Posterior vena cava (tissue), 2 donors: ENCODE measurements at regions of chr2 and their contacts with region 1.

Region 1: DNA sequence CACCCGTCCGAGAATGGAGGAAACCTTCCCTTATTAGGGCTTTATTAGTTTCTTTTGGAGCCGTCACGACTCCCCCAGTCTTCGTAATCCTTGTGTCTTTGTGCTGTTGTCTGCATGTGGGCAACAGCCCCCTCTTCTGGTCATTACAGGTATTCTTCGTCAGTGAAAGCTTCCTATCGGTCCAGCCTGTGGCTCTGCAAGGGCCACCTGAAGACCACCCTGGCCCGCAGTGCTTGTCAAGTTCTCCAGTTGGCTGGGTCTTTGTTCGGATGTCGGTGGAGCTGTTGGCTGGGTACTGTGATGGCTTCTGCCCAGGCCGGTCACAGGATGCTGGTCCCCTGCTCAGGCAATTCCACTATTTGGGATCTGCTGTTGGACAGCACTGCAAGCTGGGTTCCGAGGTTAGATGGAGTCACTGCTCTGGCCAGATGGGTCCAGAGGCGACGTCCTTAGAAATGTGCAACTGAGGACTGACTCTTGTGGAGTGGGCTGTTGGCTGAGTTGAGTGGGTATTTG is 19.2 kb downstream of the E2F6 start:
- DNase-seq: no peak

Region 2: DNA sequence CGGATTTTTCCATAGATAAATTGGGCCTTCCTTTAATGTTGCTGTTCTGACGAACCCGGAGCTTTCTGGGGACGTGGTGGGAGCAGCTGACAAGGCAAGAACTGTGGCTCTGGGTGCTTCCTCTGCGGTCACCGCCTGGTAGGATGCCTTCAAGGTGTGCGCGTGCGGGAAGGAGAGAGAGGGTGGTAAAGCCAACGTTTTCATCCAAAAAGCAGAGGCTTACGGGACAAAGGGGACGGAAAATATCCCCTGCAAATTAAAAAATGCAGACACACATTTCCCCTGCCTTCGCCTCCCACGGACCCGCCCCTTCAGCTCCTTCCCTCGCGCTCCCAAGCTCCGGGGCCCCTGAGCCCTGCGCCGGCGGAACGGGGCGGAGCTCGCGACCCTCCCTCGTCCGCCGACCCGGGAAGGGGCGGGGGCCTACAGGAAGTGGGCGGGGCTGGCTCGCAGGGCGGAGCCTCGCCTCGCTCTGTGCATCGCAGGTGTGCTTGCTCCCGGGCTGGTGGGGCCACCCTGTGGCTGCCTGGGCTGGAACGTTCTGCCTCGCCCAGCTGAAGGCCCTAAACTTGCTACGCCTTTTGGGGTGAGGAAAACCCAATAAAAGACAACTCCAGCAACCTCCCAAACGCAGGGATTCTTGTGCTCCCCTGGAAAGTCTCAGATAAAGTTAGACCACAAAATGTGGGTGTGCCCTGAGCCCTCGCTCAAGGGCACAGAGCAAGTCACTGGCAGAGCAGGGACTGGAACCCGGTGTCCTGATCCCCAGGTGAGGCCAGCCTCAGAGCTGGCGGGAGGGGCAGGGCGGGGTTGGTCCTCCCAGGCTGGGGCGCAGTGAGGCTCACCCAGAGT is 317.0 kb before region 1 on chr2:
- intact Hi-C with region 1: loop called in 1 of 2 experiments (anchors 5 kb)
- DNase-seq: peak; percentile 79

Region 3: DNA sequence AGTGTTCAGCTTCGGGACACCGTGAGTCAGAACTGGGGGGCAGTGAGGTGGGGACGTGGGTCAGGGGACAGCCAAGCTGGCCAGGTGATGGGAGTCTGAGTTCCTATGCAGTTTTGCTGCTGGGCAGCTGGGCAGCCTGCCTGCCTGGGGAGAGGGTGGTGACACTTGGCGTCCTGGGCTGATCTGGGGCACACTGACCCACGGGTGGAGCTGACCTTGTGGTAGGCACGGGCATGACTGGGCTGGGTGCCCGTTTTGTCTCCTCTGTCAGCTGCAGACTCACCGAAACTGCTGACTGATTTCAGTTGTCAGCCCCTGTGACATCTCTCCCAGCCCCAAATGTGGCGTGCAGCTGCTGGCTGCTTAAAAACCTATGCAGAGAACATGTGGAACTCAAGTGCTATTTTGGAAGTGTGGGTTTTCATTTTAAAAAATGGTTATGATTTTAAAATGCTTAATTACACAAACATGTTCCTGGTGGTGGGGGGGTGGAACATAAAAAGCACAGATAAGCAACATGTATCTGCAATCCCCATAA is 51.8 kb after region 1 on chr2:
- intact Hi-C with region 1: no loop called
- DNase-seq: peak; percentile 83